Left cardiac atrium (tissue), 4 donors: ENCODE measurements at regions of chr17 and their contacts with region 1.

Region 1: GRCh38 chr17:68759343-68760132 is 158.4 kb upstream of the FAM20A start:
- DNase-seq: peak; percentile 90
- ATAC-seq: peak; percentile 98 to 99

Region 2: GRCh38 chr17:68172461-68172954 is 587.0 kb before region 1 on chr17:
- intact Hi-C with region 1: loop called in 1 of 2 experiments (anchors 5 kb)
- DNase-seq: peak; percentile 60
- ATAC-seq: peak; percentile 78 to 81

Region 3: DNA sequence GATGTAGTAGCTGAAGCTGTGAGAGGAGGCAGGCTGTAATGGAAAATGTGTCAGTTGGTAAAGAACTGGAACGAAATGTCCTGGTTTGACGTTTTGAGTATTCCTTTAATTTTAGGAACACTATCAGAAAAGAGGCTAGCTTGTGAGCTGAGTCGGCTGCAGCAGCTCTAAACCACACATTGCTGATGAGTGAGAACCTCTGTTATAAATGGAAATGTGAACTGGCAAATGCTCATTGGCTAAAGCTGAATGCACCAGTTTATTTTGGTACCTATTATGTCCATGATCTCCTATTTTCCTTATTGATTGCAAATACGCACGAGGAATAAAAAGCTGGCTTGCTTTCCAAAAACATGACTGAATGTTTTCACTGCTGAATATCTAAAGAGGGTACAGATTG is 291.2 kb before region 1 on chr17:
- intact Hi-C with region 1: loop called in 1 of 2 experiments (anchors 5 kb)
- DNase-seq: no peak
- ATAC-seq: peak; percentile 75 to 84

Region 4: GRCh38 chr17:68539548-68540467 is 219.7 kb before region 1 on chr17:
- intact Hi-C with region 1: loop called (anchors 10 kb)
- DNase-seq: no peak
- ATAC-seq: peak in 1 of 2 donors; percentile 17

Region 5: GRCh38 chr17:68613739-68614298 is 145.7 kb before region 1 on chr17:
- intact Hi-C with region 1: loop called in 1 of 2 experiments (anchors 10 kb)
- DNase-seq: peak; percentile 29
- ATAC-seq: peak; percentile 41 to 67

Region 6: DNA sequence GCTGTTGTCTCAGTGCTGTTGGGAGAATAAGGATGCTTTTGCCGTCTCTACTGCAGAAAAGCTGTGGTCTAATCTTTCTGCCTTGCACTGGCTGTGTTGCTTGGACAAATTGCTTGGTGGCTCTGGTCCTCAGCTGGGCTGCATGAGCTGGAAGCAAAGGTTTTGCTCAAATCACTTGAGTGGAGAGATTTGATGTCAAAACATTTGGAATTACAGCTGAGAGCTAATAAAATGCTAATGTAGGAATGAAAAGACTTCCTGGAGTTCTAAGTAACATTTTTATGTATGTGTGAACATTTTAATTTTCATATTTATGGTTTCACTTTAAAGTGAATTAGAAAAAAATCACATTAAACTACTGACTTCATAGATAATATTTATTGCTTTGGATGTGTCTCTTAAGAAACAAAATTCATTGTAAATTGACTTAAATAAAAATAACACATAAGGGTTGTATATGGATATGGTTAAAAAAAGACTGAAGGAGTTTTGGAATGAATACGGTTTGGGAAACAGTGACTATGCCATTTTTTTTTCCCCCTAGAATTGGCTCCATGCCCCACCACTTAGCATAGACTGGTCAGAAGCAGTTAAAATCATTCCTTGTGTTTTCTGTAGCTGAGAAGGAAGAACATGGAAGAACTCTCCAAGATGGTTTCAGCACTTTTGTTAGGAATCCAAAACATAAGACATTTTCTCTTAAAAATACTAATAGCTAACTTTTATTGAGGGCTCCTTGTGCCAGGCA is 119.1 kb before region 1 on chr17:
- intact Hi-C with region 1: no loop called
- DNase-seq: no peak
- ATAC-seq: no peak